ENCODE measurements at regions of chr2 and their contacts with region 1.

Region 1: DNA sequence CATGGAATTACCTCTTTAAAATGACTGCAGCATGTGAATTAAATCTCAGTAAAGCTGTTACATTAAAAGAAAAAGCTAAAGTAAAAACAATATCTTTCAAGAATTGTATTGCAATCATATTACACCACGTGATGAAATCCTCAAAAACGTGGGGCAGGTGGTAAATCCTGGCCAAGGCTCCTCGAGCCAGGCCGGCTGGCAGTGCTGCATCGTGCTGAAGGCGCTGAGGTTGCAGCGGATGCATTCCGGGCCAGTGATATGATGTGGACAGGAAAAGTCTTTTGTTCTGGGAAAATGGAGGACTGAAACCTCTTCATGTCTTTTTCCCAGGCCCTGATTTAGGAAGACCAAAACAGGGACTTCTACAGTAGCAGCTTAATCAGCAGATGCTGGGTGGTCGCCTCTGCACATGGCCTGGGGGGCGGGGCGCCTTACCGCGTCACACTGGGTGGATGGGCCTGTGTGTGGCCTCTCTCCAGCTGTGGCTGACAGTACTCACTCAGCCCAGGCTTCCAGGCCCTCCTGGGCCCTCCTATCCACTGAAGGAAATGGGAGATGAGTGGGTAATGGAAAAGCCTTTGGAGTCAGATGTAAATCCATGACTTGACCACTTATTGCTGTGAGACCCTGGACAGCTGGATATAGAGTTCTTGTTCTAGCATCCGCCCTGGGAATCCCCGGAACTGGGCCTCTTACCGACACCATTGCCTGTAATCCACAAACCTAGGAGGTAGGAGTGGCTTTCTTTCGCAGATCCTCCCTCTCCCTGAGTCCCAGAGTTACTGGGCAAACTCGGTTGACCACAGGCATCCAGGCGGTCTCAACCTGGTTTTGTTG is 45.1 kb downstream of the PROC start:
- DNase-seq: peak in 1 of 2 donors; percentile 54
- H3K4me3 ChIP-seq: no peak overlapping the region
- H3K27ac ChIP-seq: no peak overlapping the region
- H3K4me1 ChIP-seq: no peaks in the 10 kb centered on the region
- H3K27me3 ChIP-seq: no peaks in the 10 kb centered on the region
- CTCF ChIP-seq: no peak
- EP300 ChIP-seq: no peak
- POLR2A ChIP-seq: no peak

Region 2: GRCh38 chr2:127330753-127331152 is 132.6 kb before region 1 on chr2:
- intact Hi-C with region 1: loop called (anchors 10 kb)
- DNase-seq: no peak
- H3K4me3 ChIP-seq: no peak overlapping the region
- H3K27ac ChIP-seq: no peak overlapping the region
- H3K4me1 ChIP-seq: no peaks in the 10 kb centered on the region
- H3K27me3 ChIP-seq: no peaks in the 10 kb centered on the region
- CTCF ChIP-seq: no peak
- EP300 ChIP-seq: no peak
- POLR2A ChIP-seq: no peak